ENCODE measurements at regions of chr10 and their contacts with region 1.

Region 1: GRCh38 chr10:47047671-47048525 is 136.7 kb downstream of the PTPN20 start:
- DNase-seq: peak; percentile 70 to 81 (median 75)
- H3K4me3 ChIP-seq: no peak overlapping the region
- H3K27ac ChIP-seq: no peak overlapping the region
- H3K4me1 ChIP-seq: peaks cover 0 to 12% (median 9%) of the 10 kb centered on the region in 4 experiments
- H3K27me3 ChIP-seq: no peaks in the 10 kb centered on the region

Region 2: GRCh38 chr10:47165711-47166524 is 118.0 kb after region 1 on chr10:
- CTCF ChIA-PET with region 1: interaction called, 12 read pairs
- POLR2A ChIA-PET with region 1: no interaction called
- DNase-seq: peak; percentile 58 to 88 (median 85)
- H3K4me3 ChIP-seq: peak overlapping the region in 6 of 7 experiments; percentile 37 to 76 (median 47)
- H3K27ac ChIP-seq: peak overlapping the region; percentile 15 to 73
- H3K4me1 ChIP-seq: peaks cover 0 to 19% (median 17%) of the 10 kb centered on the region in 4 experiments
- H3K27me3 ChIP-seq: no peaks in the 10 kb centered on the region

Region 3: GRCh38 chr10:47192273-47192672 is 144.4 kb after region 1 on chr10:
- CTCF ChIA-PET with region 1: no interaction called
- POLR2A ChIA-PET with region 1: no interaction called
- DNase-seq: no peak
- H3K4me3 ChIP-seq: no peak overlapping the region
- H3K27ac ChIP-seq: no peak overlapping the region
- H3K4me1 ChIP-seq: peaks cover 0 to 11% (median 0%) of the 10 kb centered on the region in 4 experiments
- H3K27me3 ChIP-seq: no peaks in the 10 kb centered on the region

Region 4: DNA sequence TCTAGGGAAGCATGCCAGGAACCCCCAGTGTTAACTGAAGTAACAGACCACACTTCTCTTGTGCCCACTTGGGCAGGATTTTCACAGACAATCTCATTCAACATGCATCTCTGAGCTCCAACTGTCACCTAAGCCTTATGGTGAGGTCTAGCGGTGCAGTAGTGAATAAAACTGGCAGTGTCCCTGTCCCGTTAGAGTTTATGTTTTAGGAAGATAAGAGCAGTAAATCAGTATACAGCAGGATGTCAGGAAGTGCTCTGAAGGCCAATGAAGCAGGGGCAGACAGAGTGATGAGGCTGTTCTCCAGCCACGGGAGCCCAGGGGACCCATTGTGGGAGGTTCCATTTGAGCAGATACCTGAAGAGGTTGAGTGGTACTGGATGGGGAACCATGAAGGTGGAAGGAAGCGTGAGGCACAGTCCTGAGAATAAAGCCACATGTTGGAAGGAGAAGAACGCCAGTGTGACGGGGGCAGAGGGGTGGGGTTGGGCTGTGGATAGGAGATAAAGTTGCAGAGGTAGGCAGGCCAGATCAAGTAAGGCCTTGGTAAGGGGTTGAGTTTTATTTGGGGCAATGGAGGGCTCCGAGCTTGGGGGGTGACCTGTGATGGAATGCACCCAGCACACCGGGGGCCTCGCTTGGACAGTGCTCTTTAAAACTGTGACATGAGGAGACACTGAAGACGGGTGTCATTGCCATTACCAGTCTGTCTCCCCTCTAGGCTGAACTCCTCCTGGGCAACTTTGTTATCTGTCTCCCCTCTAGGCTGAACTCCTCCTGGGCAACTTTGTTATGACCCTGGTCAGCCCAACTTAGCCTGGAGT is 258.7 kb after region 1 on chr10:
- CTCF ChIA-PET with region 1: interaction called, 183 read pairs
- POLR2A ChIA-PET with region 1: no interaction called
- DNase-seq: peak; percentile 41 to 93 (median 88)
- H3K4me3 ChIP-seq: no peak overlapping the region
- H3K27ac ChIP-seq: no peak overlapping the region
- H3K4me1 ChIP-seq: peaks cover 0 to 30% (median 12%) of the 10 kb centered on the region in 4 experiments
- H3K27me3 ChIP-seq: peaks cover 0 to 23% (median 8%) of the 10 kb centered on the region in 5 experiments